ENCODE measurements at regions of chr16 and their contacts with region 1.

Region 1: GRCh38 chr16:85821441-85822135 is 22.1 kb downstream of the COX4I1 start:
- DNase-seq: peak; percentile 46 to 86 (median 75)
- ATAC-seq: peak; percentile 75 to 84 (median 84)
- H3K4me3 ChIP-seq: no peak overlapping the region
- H3K4me3 Mint-ChIP-seq: no peak overlapping the region
- H3K27ac ChIP-seq: no peak overlapping the region
- H3K27ac Mint-ChIP-seq: no peak overlapping the region
- H3K4me1 ChIP-seq: peaks cover 0 to 10% of the 10 kb centered on the region in 2 experiments
- H3K4me1 Mint-ChIP-seq: peaks cover 6 to 8% (median 8%) of the 10 kb centered on the region in 3 donors
- H3K27me3 ChIP-seq: peaks cover 0 to 24% of the 10 kb centered on the region in 2 experiments
- H3K27me3 Mint-ChIP-seq: peaks cover 5 to 6% of the 10 kb centered on the region in 2 donors

Region 2: GRCh38 chr16:85943711-85944110 is 122.1 kb after region 1 on chr16:
- CTCF ChIA-PET with region 1: no interaction called
- POLR2A ChIA-PET with region 1: no interaction called
- DNase-seq: no peak
- ATAC-seq: no peak
- H3K4me3 ChIP-seq: no peak overlapping the region
- H3K4me3 Mint-ChIP-seq: no peak overlapping the region
- H3K27ac ChIP-seq: no peak overlapping the region
- H3K27ac Mint-ChIP-seq: no peak overlapping the region
- H3K4me1 ChIP-seq: peaks cover 11 to 39% of the 10 kb centered on the region in 2 experiments
- H3K4me1 Mint-ChIP-seq: peaks cover 25 to 33% (median 29%) of the 10 kb centered on the region in 3 donors
- H3K27me3 ChIP-seq: peaks cover 0 to 28% of the 10 kb centered on the region in 2 experiments
- H3K27me3 Mint-ChIP-seq: peaks cover 0 to 11% of the 10 kb centered on the region in 2 donors

Region 3: DNA sequence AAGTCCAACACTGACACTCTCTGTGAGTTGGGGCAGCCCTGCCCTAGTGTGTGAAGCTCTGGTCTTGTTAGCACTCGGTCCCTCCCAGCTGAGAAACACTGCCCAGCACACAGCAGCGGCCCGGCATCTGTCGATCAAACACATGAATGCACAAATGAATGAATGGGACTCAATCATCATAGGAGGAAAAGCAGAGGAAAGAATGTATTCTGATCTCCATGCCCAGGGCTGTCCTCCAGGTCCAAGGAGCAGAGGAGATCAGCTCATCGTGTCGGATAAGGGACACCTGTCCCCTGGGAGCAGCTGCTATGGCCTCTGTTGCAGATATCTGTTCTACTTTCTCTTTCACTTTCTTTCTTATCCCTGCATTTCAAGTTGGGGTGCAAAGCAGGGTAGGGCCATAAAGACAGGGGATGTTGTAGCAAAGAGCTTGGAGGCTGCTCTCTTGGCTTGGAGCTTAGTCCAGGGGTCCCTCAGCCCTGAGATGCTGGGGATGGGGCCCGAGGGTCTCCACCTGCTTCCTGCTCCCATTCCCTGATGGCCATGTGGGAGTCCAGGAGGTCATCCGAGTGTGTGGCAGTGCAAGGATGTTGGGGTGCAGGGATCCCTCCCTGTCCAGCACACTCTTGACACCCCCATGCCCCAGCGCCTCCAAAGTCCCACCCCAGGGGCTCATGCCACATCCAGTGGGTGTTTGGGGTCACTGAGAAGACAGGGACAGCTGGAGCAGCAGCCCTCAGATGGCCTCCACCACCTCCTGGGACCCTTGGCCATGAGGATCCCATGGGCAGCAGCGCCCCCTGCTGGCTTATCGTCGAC is 165.6 kb after region 1 on chr16:
- CTCF ChIA-PET with region 1: interaction called, 64 to 98 read pairs
- POLR2A ChIA-PET with region 1: interaction called in 1 of 2 experiments, 4 read pairs
- DNase-seq: peak in 23 of 35 experiments; percentile 7 to 61 (median 22)
- ATAC-seq: peak in 2 of 4 experiments; percentile 32 to 47
- H3K4me3 ChIP-seq: no peak overlapping the region
- H3K4me3 Mint-ChIP-seq: no peak overlapping the region
- H3K27ac ChIP-seq: no peak overlapping the region
- H3K27ac Mint-ChIP-seq: no peak overlapping the region
- H3K4me1 ChIP-seq: peaks cover 2 to 37% of the 10 kb centered on the region in 2 experiments
- H3K4me1 Mint-ChIP-seq: peaks cover 14 to 50% (median 18%) of the 10 kb centered on the region in 3 donors
- H3K27me3 ChIP-seq: peaks cover 0 to 27% of the 10 kb centered on the region in 2 experiments
- H3K27me3 Mint-ChIP-seq: peaks cover 11 to 18% of the 10 kb centered on the region in 2 donors

Region 4: DNA sequence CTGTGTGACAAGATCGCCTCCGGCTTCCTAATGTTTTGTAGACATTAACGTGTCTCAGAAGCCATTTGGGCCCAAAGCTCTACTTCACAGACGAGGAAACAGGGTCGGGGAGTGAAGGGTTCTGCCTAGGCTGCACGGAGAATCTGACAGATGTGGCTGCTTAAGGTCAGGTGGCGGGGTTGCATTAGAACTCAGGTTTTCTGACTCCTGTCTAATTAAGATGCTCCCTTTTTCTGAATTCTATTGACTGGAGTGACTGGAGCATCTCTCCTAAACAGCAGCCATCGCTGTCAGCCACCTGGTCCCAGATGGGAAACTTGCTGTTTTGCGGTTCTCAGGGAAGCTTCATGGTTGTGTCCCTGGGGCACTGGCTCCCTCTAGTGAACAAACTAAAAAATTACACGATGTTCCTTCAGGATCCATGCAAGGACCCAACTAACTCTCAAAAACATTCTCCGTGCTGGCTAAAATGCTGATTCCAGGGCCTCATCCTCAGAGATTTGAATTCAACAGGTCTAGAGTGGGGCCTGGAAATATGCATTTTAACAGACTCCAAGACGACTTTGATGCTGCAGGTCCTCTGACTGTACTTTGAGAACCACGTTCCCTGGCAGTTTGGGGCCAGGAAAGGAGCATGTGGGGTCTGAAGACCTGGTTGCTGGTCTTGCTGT is 194.7 kb after region 1 on chr16:
- CTCF ChIA-PET with region 1: interaction called, 5 to 24 read pairs
- POLR2A ChIA-PET with region 1: no interaction called
- DNase-seq: peak in 19 of 35 experiments; percentile 2 to 70 (median 17)
- ATAC-seq: peak in 1 of 4 experiments; percentile 45
- H3K4me3 ChIP-seq: no peak overlapping the region
- H3K4me3 Mint-ChIP-seq: no peak overlapping the region
- H3K27ac ChIP-seq: no peak overlapping the region
- H3K27ac Mint-ChIP-seq: no peak overlapping the region
- H3K4me1 ChIP-seq: no peaks in the 10 kb centered on the region
- H3K4me1 Mint-ChIP-seq: no peaks in the 10 kb centered on the region
- H3K27me3 ChIP-seq: peaks cover 0 to 35% of the 10 kb centered on the region in 2 experiments
- H3K27me3 Mint-ChIP-seq: peaks cover 34 to 40% of the 10 kb centered on the region in 2 donors